ENCODE measurements at regions of chr13 and their contacts with region 1.

Region 1: DNA sequence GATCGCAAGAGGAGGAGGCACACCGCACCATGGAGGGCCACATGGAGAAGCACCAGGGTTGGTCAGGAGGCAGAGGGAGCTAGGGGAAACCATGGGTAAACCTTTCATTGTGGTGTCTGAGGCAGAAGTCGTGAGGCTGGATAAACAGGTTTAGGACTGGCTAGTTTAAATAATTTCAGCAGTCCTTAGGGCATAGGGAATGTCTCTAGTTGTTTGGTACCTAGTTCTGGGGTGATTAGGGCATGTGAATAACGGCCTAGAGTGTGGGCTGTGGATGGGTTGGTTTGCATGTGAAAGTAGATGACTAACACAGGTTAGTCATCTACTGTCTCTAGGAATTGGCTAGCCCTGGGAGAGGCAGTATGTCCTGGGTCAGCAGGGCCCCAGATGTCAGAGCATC is 102.3 kb downstream of the STOML3 start:
- DNase-seq: peak in 1 of 2 experiments; percentile 10
- H3K4me3 ChIP-seq: no peak overlapping the region
- H3K27ac ChIP-seq: no peak overlapping the region
- H3K4me1 ChIP-seq: peaks cover 0 to 5% (median 1%) of the 10 kb centered on the region in 4 experiments; a peak in 1 of 7 replicates
- H3K27me3 ChIP-seq: no peaks in the 10 kb centered on the region
- CTCF ChIP-seq: no peak
- EP300 ChIP-seq: no peak
- POLR2A ChIP-seq: no peak
- RAD21 ChIP-seq: no peak

Region 2: DNA sequence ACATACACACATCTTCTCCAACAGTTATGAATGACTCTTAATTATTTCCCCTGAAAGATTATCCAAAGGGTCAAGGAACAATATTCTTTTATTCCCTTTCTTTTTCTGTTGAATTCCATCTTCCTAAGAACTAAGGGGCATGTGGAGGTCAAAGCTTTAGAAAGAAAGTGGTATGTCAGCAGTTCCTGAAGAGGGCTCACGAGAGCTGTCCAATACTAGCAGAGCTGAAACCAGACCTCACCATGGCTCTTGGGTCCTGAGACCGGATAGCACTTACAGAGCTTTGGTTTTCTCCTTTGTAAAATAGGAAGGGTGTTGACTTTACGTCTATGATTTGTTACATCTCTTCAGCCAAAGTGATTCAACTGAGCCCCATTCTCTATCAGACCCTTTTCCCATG is 311.3 kb before region 1 on chr13:
- CTCF ChIA-PET with region 1: no interaction called
- POLR2A ChIA-PET with region 1: no interaction called
- DNase-seq: no peak
- H3K4me3 ChIP-seq: no peak overlapping the region
- H3K27ac ChIP-seq: no peak overlapping the region
- H3K4me1 ChIP-seq: peaks cover 0 to 2% (median 0%) of the 10 kb centered on the region in 4 experiments; a peak in 1 of 7 replicates
- H3K27me3 ChIP-seq: no peaks in the 10 kb centered on the region
- CTCF ChIP-seq: no peak
- EP300 ChIP-seq: no peak
- POLR2A ChIP-seq: no peak
- RAD21 ChIP-seq: peak in 1 of 2 experiments; percentile 40; a peak in 2 of 4 replicates

Region 3: DNA sequence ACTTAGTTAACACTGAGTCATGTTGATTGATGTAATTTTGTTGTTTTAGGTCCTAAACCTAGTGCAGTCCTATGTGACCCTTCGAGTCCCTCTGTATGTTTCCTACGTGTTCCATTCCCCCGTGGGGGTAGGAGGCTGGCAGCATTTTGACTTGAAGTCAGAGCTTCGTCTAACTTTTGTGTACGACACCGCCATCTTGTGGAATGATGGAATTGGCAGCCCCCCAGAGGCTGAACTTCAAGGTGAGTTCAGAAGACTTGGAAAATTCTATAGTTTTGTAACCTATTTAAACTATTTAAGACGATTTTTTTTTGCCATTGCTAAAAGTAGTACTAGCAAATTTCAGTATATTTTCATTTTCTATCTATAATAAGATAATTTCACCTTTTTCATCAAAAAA is 15.6 kb before region 1 on chr13:
- CTCF ChIA-PET with region 1: interaction called, 33 read pairs
- POLR2A ChIA-PET with region 1: no interaction called
- DNase-seq: peak; percentile 51 to 77
- H3K4me3 ChIP-seq: no peak overlapping the region
- H3K27ac ChIP-seq: no peak overlapping the region
- H3K4me1 ChIP-seq: no peaks in the 10 kb centered on the region
- H3K27me3 ChIP-seq: no peaks in the 10 kb centered on the region
- CTCF ChIP-seq: peak; percentile 57 to 95 (median 83)
- EP300 ChIP-seq: no peak
- POLR2A ChIP-seq: no peak
- RAD21 ChIP-seq: peak; percentile 78 to 85